ENCODE measurements at regions of chr19 and their contacts with region 1.

Region 1: DNA sequence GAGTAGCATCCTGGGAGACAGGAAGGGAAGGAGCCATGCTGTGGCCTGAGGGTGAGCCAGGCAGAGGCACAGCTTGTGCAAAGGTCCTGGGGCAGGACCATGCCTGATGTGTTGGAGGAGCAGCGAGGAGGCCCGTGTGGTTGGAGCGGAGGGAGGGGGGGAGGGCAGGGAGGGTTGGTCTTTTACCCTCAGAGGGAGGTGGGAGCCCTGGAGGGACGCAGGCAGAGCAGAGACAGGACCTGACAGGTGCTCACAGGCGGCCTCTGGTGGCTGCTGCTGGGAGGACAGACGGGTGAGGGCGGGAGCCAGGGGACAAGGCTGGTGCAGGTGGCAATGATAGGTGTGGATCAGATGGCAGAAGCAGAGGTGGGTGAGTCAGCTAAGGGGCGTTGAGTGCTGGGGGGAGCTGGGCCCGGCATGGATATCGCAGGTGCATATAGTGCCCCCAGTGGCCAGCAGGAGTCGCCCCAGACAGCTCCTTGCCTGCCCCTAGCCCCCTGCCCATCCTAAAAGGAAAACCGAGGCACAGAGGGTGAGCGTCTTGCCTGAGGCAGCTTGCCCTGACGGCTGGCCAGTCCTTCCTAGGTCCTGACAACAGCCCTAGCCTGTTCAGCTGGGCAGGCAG is 9.8 kb upstream of the GNA15 start:
- DNase-seq: peak; percentile 68
- H3K4me3 Mint-ChIP-seq: no peak overlapping the region
- H3K27ac Mint-ChIP-seq: no peak overlapping the region
- H3K4me1 Mint-ChIP-seq: peaks cover 21% of the 10 kb centered on the region
- H3K27me3 Mint-ChIP-seq: no peaks in the 10 kb centered on the region

Region 2: DNA sequence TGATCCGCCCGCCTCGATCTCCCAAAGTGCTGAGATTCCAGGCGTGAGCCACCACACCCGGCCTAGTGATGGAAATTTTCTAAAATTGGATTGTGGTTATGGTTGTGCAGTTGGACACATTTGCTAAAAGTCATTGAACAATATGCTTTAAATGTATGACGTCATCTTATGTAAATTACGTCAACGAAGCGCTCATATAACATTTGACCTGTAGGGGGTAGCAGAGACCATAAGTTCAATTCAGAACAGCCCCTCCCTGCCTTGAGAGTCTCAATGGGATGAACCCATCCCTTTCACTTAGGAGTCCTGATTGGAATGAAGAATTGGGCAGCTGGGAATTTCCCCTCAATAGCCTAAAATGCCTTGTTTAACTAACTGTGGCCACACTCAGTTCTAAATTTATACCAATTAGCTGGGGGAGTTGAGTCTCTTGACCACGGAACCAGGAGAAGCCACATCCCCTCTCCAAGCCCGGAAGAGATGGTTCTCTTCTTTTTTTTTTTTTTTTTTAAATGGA is 163.9 kb before region 1 on chr19:
- CTCF ChIA-PET with region 1: interaction called, 11 read pairs
- POLR2A ChIA-PET with region 1: no interaction called
- DNase-seq: peak; percentile 54
- H3K4me3 Mint-ChIP-seq: peak overlapping the region; percentile 48
- H3K27ac Mint-ChIP-seq: no peak overlapping the region
- H3K4me1 Mint-ChIP-seq: peaks cover 5% of the 10 kb centered on the region
- H3K27me3 Mint-ChIP-seq: no peaks in the 10 kb centered on the region

Region 3: DNA sequence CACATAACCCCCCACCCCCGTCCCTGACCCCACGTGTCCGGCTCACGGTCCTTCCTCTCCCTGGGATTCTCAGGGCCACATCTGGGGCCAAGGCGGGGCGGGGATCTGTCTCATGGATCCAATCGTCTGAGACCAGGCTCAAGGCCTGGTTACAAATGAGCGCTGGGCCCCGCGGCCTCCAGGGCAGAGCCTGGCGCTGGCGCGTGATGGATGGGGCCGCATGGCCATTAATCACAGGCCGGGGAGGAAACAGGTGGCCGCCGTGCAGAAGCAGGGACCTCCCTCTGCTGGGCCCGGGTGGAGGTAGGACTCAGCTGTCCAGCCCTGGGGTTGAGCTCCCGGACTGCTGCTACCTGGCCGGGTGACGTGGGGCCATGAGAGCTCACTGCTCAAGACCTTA is 57.9 kb before region 1 on chr19:
- CTCF ChIA-PET with region 1: no interaction called
- POLR2A ChIA-PET with region 1: no interaction called
- DNase-seq: no peak
- H3K4me3 Mint-ChIP-seq: no peak overlapping the region
- H3K27ac Mint-ChIP-seq: no peak overlapping the region
- H3K4me1 Mint-ChIP-seq: peaks cover 12% of the 10 kb centered on the region
- H3K27me3 Mint-ChIP-seq: no peaks in the 10 kb centered on the region

Region 4: GRCh38 chr19:3142292-3142670 is 16.3 kb after region 1 on chr19:
- CTCF ChIA-PET with region 1: interaction called, 27 read pairs
- POLR2A ChIA-PET with region 1: interaction called, 5 read pairs
- DNase-seq: no peak
- H3K4me3 Mint-ChIP-seq: peak overlapping the region; percentile 21
- H3K27ac Mint-ChIP-seq: peak overlapping the region; percentile 61
- H3K4me1 Mint-ChIP-seq: peaks cover 56% of the 10 kb centered on the region
- H3K27me3 Mint-ChIP-seq: no peaks in the 10 kb centered on the region